ENCODE measurements at regions of chr17 and their contacts with region 1.

Region 1: DNA sequence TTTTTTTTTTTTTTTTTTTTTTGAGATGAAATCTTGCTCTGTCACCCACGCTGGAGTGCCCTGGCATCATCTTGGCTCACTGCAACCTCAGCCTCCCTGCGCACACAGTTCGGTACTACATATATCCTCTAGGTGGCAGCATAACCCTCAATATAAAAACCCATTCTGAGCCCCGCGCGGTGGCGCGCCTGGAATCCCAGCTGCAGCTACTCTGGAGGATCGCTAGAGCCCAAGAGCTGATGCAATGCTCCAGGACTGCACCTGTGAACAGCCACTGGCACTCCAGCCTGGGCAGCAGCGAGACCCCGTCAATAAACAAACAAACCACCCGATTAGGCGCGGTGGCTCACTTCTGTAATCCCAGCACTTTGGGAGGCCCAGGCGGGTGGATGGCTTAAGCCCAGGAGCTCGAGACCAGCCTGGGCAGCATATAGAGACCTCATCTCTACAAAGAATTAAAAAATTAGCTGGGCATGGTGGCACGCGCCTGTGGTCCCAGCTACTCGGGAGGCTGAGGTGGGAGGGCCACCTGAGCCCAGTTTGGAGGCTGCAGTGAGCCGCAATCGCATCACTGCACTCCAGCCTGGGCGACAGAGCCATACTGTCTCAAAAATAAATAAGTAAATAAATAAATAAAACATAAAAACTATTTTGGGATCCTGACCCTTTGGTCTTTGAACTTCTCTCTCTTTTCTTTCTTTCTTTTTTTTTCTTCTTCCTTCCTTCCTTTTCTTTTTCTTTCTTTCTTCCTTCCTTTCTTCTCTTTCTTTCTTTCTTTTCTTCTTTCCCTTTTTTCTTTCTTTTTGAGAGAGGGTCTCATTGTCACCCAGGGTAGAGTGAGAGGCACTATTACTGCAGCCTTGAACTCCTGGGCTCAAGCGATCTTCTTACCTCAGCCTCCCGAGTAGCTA is 15.4 kb upstream of the AKAP10 start:
- DNase-seq: peak; percentile 88 to 96 (median 93)
- ATAC-seq: peak; percentile 97 to 98
- H3K4me3 ChIP-seq: no peak overlapping the region
- H3K27ac ChIP-seq: no peak overlapping the region
- H3K4me1 ChIP-seq: no peaks in the 10 kb centered on the region
- H3K27me3 ChIP-seq: no peaks in the 10 kb centered on the region

Region 2: DNA sequence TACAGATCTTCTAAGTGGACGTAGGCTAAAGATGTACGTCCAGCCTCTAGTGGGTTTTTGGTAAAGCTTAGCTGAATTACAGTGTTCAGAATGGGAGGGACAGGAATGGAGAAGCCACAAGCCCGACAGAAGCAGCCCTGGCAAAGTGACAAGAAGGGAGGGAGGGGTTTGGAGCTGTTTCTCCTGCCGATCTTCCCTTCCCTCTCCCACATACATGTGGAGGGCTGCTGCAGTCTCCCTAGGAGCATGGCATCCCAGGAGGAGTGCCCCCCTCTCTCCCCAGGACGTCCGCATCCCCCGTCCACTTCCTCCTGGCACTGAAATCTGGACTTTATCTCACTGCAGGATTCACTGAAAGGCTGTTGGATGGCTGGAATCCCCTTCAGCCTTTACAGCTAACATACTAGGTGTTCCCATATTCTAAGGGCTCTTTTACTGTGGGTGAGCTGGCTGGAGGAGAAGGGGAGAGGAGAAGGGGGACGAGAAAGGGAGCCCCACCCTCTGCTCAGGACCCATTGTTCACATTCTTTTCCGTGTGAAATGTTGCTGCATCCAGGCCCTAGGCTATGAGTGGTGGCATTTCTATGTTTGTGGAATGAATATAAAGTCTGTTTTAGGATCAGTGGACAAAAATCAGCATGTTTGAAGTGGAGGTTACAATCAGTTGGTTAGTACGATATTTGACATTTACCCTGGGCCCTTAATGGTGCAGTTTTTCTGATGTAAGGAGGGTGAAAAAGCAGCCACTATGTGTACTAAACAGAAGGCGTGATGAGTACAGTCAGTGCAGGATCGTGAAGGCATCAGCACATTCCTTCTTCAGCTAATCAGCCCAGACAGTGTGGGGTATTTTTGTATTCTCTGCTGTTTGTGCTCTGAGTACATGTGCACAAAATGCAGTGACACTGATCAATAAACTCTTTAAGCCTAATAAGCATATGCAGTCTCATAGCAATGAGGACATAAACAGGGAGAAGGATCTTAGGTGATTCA is 110.7 kb after region 1 on chr17:
- intact Hi-C with region 1: loop called in 1 of 4 experiments (anchors 5 kb)
- DNase-seq: peak in 1 of 3 donors; percentile 59
- ATAC-seq: peak; percentile 24 to 51
- H3K4me3 ChIP-seq: no peak overlapping the region
- H3K27ac ChIP-seq: no peak overlapping the region
- H3K4me1 ChIP-seq: no peaks in the 10 kb centered on the region
- H3K27me3 ChIP-seq: no peaks in the 10 kb centered on the region

Measured in right cardiac atrium (tissue), 5 donors.